ENCODE measurements at regions of chr12 and their contacts with region 1.

Region 1: GRCh38 chr12:1583421-1584078 is 10.8 kb downstream of the FBXL14 start:
- DNase-seq: peak; percentile 77
- CTCF ChIP-seq: peak; percentile 80

Region 2: GRCh38 chr12:1559676-1560091 is 23.9 kb before region 1 on chr12:
- CTCF ChIA-PET with region 1: interaction called, 10 read pairs
- POLR2A ChIA-PET with region 1: no interaction called
- DNase-seq: no peak
- CTCF ChIP-seq: no peak

Region 3: GRCh38 chr12:1594261-1595025 is 10.9 kb after region 1 on chr12 and contains the start of gene FBXL14:
- CTCF ChIA-PET with region 1: interaction called, 29 read pairs
- POLR2A ChIA-PET with region 1: interaction called, 4 read pairs
- DNase-seq: peak; percentile 85
- CTCF ChIP-seq: peak; percentile 7

Region 4: GRCh38 chr12:1605129-1606020 is 21.8 kb after region 1 on chr12:
- CTCF ChIA-PET with region 1: interaction called, 17 read pairs
- POLR2A ChIA-PET with region 1: no interaction called
- DNase-seq: peak; percentile 63
- CTCF ChIP-seq: peak; percentile 65

Region 5: DNA sequence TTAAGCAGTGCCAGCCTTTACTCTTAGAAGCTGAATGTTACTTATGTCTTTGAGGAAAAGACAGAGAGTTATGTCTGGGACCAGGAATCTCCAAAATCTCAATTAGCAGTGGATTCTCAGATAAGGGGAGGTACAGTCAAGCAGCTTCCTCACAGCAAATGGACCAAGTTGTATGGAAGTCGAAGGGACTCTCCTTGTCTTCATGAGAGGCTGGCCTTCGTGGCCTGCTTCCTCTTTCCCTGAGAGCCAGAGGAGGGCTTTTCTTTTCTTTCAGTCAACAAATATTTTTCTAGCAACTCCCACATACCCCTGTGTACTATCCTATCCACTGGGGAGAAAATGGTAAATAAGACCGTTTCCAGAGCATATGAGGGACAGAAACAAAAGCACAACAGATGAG is 38.9 kb after region 1 on chr12:
- CTCF ChIA-PET with region 1: no interaction called
- POLR2A ChIA-PET with region 1: no interaction called
- DNase-seq: no peak
- CTCF ChIP-seq: no peak

Measured in GM10248 (cell line).